Breast epithelium (tissue), 4 donors: ENCODE measurements at regions of chr14 and their contacts with region 1.

Region 1: GRCh38 chr14:73728717-73729330 is 14.6 kb upstream of the PNMA1 start:
- DNase-seq: peak; percentile 58 to 88
- H3K4me3 ChIP-seq: no peak overlapping the region
- H3K27ac ChIP-seq: peak overlapping the region; percentile 6 to 81
- H3K4me1 ChIP-seq: peaks cover 0 to 6% of the 10 kb centered on the region in 2 donors
- H3K27me3 ChIP-seq: no peaks in the 10 kb centered on the region
- CTCF ChIP-seq: peak; percentile 89 to 97 (median 95)
- POLR2A ChIP-seq: no peak

Region 2: GRCh38 chr14:73770977-73771847 is 42.4 kb after region 1 on chr14:
- intact Hi-C with region 1: loop called (anchors 1 kb)
- DNase-seq: no peak
- H3K4me3 ChIP-seq: no peak overlapping the region
- H3K27ac ChIP-seq: peak overlapping the region; percentile 70 to 76
- H3K4me1 ChIP-seq: peaks cover 4 to 29% of the 10 kb centered on the region in 2 donors
- H3K27me3 ChIP-seq: no peaks in the 10 kb centered on the region
- CTCF ChIP-seq: no peak
- POLR2A ChIP-seq: no peak

Region 3: GRCh38 chr14:73816393-73816816 is 87.6 kb after region 1 on chr14:
- intact Hi-C with region 1: loop called (anchors 10 kb)
- DNase-seq: no peak
- H3K4me3 ChIP-seq: no peak overlapping the region
- H3K27ac ChIP-seq: no peak overlapping the region
- H3K4me1 ChIP-seq: no peaks in the 10 kb centered on the region
- H3K27me3 ChIP-seq: no peaks in the 10 kb centered on the region
- CTCF ChIP-seq: no peak
- POLR2A ChIP-seq: no peak